ENCODE measurements at regions of chr14 and their contacts with region 1.

Region 1: DNA sequence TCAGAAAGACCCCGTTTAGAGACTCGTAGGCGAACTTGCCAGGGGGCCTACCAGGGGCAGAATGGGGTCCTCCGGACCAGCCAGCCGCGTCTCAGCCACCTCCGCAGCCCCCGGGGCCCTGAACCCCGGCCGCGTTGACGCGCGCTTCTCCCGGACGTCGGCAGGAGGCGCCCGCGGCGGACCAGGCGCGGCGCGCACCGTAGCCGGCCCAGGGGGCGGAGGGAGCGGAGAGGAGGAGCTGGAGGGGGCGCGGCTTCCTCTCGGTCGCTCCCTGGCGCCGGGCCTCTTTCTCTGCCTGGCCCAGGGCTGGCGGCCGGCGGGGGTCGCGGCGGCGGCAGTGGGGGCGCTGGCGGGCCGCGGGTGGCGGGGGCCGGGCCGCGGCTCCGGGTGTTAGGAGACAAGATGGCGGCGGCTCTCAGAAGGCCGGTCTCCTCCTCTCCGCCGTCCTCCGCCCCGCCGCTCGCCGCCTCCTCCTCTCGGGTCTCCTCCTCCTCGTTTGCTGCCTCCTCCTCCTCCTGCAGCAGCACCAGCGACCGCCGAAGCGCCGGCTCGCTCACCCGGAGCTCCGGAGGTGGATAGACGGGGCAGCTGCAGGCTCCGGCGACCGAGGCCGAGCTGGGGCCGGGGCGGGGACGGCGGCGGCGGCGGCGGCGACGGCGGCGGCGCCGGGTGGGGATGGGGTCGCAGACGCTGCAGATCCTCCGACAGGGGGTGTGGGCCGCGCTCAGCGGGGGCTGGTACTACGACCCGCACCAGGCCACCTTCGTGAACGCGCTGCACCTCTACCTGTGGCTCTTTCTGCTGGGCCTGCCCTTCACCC is at the start of gene PCNX1:
- DNase-seq: peak; percentile 86 to 94
- H3K4me3 ChIP-seq: peak within 1 kb of the TSS; percentile 95
- H3K4me3 Mint-ChIP-seq: peak within 1 kb of the TSS; percentile 80
- H3K27ac Mint-ChIP-seq: peak within 1 kb of the TSS; percentile 79
- H3K4me1 ChIP-seq: peaks cover 14% of the 10 kb centered on the region
- H3K4me1 Mint-ChIP-seq: peaks cover 21% of the 10 kb centered on the region
- H3K27me3 ChIP-seq: no peaks in the 10 kb centered on the region
- H3K27me3 Mint-ChIP-seq: no peaks in the 10 kb centered on the region
- CTCF ChIP-seq: peak; percentile 47 to 77
- total RNA-seq, gene PCNX1: 29.0 and 37.4 TPM in 2 replicates

Region 2: DNA sequence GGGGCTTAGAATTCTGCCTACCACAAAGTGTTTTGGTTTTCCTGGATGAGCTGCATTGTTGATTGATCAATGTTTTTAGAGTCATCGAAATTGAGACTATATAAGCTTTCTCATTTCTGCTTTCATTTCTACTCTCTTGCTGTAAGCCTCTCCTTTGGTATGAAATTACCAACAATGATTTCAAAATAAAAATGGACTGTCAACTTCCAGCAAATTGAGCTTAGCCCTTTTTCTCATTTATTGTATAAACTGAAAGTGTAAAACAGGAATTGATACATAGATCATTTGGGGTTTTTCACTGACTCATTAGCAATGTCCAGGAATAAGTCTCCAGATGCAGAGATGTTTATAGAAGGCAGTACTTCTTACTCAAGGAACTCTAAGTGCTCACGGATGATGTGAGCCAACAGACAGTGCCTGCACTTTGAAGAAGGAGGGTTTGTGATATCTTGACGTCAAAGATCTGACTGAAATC is 20.1 kb before region 1 on chr14:
- CTCF ChIA-PET with region 1: no interaction called
- POLR2A ChIA-PET with region 1: no interaction called
- intact Hi-C with region 1: no loop called
- DNase-seq: no peak
- H3K4me3 ChIP-seq: no peak overlapping the region
- H3K4me3 Mint-ChIP-seq: no peak overlapping the region
- H3K27ac Mint-ChIP-seq: no peak overlapping the region
- H3K4me1 ChIP-seq: no peaks in the 10 kb centered on the region; the same call in 1 of the 2 replicates
- H3K4me1 Mint-ChIP-seq: no peaks in the 10 kb centered on the region
- H3K27me3 ChIP-seq: no peaks in the 10 kb centered on the region
- H3K27me3 Mint-ChIP-seq: no peaks in the 10 kb centered on the region
- CTCF ChIP-seq: no peak

Region 3: DNA sequence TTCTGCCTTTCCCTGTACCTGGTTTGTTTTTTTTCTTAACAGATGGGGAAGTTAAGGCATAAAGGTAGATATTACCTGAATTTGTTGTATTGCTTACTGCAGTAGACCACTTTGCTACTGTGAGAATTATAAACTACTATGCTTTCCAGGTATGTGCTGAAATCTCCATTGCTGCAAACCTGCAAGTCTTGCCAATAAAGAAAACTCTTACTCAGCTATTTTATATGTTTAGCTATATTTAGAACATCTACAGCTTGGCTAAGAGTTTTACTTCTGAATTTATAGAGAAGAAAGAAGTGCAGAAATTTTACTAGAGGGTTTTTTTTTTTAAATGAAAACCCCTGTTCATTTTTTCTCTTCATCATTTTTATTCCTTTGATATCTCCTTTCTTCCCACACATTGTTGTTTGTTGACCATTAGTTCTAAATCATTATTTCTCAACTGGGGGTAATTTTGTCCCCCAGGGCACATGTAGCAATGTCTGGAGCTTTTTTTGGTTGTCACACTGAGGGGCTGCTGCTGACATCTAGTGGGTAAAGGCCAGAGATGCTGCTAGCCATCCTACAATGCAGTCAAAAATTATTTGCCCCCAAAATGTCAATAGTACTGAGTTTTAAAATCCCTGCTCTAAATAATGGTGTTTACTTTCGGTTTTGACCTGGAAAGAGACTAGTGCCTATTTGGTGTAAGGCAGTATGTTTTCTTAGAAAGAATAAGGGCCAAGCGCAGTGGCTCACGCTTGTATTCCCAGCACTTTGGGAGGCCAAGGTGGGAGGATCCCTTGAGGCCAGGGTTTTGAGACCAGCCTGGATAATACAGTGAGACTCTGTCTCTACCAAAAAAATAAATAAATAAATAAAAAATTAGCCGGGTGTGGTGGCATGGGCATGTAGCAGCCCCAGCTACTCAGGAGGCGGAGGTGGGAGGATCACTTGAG is 48.4 kb after region 1 on chr14:
- CTCF ChIA-PET with region 1: interaction called, 11 read pairs
- POLR2A ChIA-PET with region 1: no interaction called
- intact Hi-C with region 1: loop called (anchors 1 kb)
- DNase-seq: peak in 1 of 2 experiments; percentile 39
- H3K4me3 ChIP-seq: no peak overlapping the region
- H3K4me3 Mint-ChIP-seq: no peak overlapping the region
- H3K27ac Mint-ChIP-seq: no peak overlapping the region
- H3K4me1 ChIP-seq: no peaks in the 10 kb centered on the region
- H3K4me1 Mint-ChIP-seq: no peaks in the 10 kb centered on the region
- H3K27me3 ChIP-seq: no peaks in the 10 kb centered on the region
- H3K27me3 Mint-ChIP-seq: no peaks in the 10 kb centered on the region
- CTCF ChIP-seq: peak; percentile 40 to 65

Region 4: GRCh38 chr14:70972107-70972976 is 65.0 kb after region 1 on chr14:
- CTCF ChIA-PET with region 1: interaction called, 6 read pairs
- POLR2A ChIA-PET with region 1: no interaction called
- intact Hi-C with region 1: loop called (anchors 1 kb)
- DNase-seq: peak; percentile 77 to 79
- H3K4me3 ChIP-seq: no peak overlapping the region
- H3K4me3 Mint-ChIP-seq: no peak overlapping the region
- H3K27ac Mint-ChIP-seq: no peak overlapping the region
- H3K4me1 ChIP-seq: no peaks in the 10 kb centered on the region
- H3K4me1 Mint-ChIP-seq: no peaks in the 10 kb centered on the region
- H3K27me3 ChIP-seq: no peaks in the 10 kb centered on the region
- H3K27me3 Mint-ChIP-seq: no peaks in the 10 kb centered on the region
- CTCF ChIP-seq: peak; percentile 71 to 88

Measured in Caco-2 (cell line).